ENCODE measurements at regions of chr1 and their contacts with region 1.

Region 1: DNA sequence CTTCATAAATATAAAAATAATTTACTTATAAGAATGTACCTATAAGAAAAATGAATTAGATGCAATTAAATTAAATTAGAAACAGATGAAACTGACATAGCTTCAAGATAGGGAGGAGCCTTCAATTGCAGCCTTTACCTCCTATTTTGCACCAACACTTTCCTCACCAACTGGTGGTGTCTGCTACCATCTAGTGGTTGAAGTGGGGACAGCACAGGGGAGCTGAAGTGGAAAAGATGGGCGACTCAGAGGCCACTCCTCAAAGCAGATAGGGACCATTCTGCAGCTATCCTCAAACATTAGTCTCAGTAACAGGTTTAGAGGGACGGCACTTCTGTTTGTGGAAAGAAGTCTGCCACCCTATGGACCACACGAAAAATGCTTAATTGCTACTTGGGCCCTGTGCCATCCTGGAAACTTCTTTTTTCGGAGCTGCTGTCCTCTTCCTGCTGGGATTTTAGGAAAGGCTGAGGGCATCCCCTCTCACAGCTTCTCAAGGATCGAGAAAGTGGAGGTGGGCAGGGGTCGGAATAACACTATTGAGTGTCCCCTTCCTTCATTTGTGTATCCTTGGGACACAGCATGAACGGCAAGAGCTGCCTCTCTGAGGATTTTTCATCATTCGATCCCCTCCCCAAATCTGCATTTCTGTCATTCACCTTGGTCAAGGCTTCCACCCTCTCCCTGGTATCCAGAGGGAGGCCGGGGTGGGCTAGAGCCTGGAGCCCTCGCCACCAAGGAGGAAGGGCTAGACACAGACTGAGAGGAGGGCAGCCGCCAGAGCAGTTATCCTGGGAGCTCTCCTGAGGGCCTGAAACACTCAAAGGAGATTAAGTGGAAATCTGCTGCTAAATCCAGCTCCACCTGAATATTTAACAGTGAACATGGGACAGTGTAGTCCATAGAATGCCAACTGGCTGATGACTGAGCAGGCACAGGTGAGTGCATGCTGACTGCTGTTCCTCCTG is 9.6 kb downstream of the PROK1 start:
- DNase-seq: peak; percentile 38
- ATAC-seq: peak; percentile 96
- H3K4me3 ChIP-seq: no peak overlapping the region
- H3K27ac ChIP-seq: no peak overlapping the region
- H3K4me1 ChIP-seq: no peaks in the 10 kb centered on the region
- H3K27me3 ChIP-seq: no peaks in the 10 kb centered on the region
- CTCF ChIP-seq: peak; percentile 92 to 98 (median 97)
- EP300 ChIP-seq: no peak
- POLR2A ChIP-seq: no peak
- RAD21 ChIP-seq: peak; percentile 100

Region 2: DNA sequence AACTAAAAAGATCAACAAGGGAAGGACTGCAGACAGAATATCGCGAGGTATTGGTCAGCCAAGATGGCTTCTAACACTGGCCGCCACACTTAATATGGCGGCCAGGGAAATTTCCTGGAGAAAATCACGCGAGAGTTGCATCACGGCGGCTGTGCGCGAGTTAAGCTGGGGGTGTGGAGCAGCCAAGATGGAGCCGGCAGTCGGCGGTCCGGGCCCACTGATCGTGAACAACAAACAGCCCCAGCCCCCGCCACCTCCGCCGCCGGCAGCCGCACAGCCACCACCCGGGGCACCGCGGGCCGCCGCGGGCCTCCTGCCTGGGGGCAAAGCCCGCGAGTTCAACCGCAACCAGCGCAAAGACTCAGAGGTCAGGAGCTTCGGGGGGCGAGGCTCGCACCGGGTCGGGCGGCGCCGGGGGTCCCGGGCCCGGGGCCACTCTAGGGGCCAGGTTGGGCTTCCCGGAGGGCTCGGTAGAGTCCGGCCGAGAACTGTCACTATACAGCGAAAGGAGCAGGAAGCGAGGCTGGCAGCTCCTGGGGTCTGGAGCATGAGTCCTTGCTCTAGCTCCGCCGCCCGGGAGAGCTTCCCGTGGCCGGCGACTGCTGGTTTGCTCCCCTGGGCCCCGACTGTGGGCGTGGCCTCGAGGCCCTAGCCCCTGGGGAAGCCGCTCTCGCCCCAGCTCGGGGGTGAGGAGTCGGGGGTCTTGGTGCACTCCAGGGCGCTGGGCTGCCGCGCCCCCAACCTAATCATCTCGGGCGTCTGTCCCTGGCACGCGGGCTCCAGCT is 425.9 kb before region 1 on chr1 and contains the start of gene STRIP1:
- CTCF ChIA-PET with region 1: interaction called, 13 read pairs
- POLR2A ChIA-PET with region 1: no interaction called
- RAD21 ChIA-PET with region 1: interaction called, 10 read pairs
- SMC1A ChIA-PET with region 1: interaction called, 4 read pairs
- in situ Hi-C with region 1: no loop called
- intact Hi-C with region 1: no loop called
- DNase-seq: peak; percentile 93
- ATAC-seq: peak; percentile 96
- H3K4me3 ChIP-seq: peak within 1 kb of the TSS; percentile 90
- H3K27ac ChIP-seq: peak within 1 kb of the TSS; percentile 84
- H3K4me1 ChIP-seq: peaks cover 19% of the 10 kb centered on the region
- H3K27me3 ChIP-seq: no peaks in the 10 kb centered on the region
- CTCF ChIP-seq: no peak
- EP300 ChIP-seq: no peak
- POLR2A ChIP-seq: peak; percentile 86
- RAD21 ChIP-seq: no peak
- polyA plus RNA-seq, gene STRIP1: 6.3 to 7.9 TPM

Region 3: DNA sequence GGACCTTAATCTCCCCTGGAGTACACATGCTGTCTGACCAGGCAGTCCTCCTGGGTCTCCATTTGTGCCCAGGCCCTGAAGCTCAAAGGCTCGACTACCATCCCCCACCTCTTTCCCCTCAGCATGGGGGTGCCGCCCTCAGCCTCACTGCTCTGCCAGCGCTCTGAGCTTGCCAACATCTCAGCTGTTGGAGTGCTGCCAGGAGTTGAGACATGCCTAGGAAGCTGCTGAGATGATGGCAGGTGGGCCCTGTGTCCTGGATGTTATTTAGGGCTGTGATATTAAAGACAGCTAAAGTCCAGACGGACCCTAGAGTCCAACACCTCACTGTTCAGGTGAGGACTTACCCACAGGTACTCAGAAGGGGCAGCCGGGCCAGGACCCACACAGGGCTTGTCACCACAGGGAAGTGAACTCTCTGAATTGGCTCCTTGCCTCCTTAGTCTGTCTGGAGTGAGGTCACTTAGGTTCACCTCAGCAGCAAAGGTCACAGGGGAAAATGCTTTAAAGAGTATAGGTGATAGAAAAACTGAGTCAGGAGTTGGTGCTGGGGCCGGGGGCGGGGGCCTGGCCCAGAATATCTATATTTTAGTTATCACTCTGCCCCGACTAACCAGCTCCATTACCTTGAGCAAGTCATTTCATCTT is 270.1 kb before region 1 on chr1:
- CTCF ChIA-PET with region 1: interaction called, 18 read pairs
- POLR2A ChIA-PET with region 1: no interaction called
- RAD21 ChIA-PET with region 1: interaction called, 5 read pairs
- SMC1A ChIA-PET with region 1: interaction called, 23 read pairs
- in situ Hi-C with region 1: no loop called
- intact Hi-C with region 1: no loop called
- DNase-seq: no peak
- ATAC-seq: no peak
- H3K4me3 ChIP-seq: no peak overlapping the region
- H3K27ac ChIP-seq: no peak overlapping the region
- H3K4me1 ChIP-seq: no peaks in the 10 kb centered on the region
- H3K27me3 ChIP-seq: peaks cover 0 to 3% of the 10 kb centered on the region in 2 experiments; a peak in 1 of 4 replicates
- CTCF ChIP-seq: no peak
- EP300 ChIP-seq: no peak
- POLR2A ChIP-seq: no peak
- RAD21 ChIP-seq: no peak

Region 4: GRCh38 chr1:110203021-110203661 is 257.4 kb before region 1 on chr1:
- CTCF ChIA-PET with region 1: interaction called, 122 read pairs
- POLR2A ChIA-PET with region 1: interaction called, 3 read pairs
- RAD21 ChIA-PET with region 1: interaction called, 71 read pairs
- SMC1A ChIA-PET with region 1: interaction called, 46 read pairs
- in situ Hi-C with region 1: loop called (anchors 5 kb)
- intact Hi-C with region 1: loop called (anchors 1 kb)
- DNase-seq: peak; percentile 17
- ATAC-seq: peak; percentile 84
- H3K4me3 ChIP-seq: no peak overlapping the region
- H3K27ac ChIP-seq: no peak overlapping the region
- H3K4me1 ChIP-seq: no peaks in the 10 kb centered on the region
- H3K27me3 ChIP-seq: peaks cover 0 to 2% of the 10 kb centered on the region in 2 experiments; a peak in 2 of 4 replicates
- CTCF ChIP-seq: peak; percentile 81 to 89 (median 81)
- EP300 ChIP-seq: no peak
- POLR2A ChIP-seq: no peak
- RAD21 ChIP-seq: peak; percentile 90

Region 5: DNA sequence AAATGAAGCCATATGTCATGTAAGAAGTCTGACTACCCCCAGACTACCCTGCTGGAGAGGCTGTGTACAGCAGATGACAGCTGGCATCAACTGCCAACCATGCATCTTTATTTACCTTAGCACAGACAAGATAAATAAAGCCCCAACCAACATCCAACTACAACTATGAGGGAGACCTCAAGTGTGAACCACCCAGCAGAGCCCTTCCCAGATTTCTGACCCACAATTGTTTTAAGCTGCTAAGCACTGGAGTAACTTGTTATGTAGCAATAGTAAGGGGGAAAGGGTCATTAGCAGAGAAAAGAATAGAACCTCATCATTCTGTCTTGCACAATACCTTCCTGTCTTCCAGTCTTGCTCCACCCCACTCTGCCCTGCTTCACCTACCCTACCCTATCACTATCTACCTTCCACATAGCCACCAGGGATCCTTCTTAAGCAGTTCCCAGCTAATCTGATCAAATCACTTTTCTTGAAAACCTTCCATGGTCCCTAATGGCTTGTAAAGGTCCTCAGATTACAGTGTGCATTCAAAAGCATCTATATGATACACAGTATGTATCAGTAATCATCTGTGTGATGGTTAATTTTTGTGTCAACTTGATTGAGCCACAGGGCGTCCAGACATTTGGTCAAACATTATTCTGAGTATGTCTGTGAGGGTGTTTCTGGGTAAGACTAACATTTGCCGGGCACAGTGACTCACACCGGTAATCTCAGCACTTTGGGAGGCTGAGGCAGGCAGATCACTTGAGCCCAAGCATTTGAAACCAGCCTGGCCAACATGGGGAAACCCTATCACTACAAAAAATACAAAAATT is 141.0 kb before region 1 on chr1:
- CTCF ChIA-PET with region 1: interaction called, 14 read pairs
- POLR2A ChIA-PET with region 1: no interaction called
- RAD21 ChIA-PET with region 1: interaction called, 8 read pairs
- SMC1A ChIA-PET with region 1: interaction called, 6 read pairs
- in situ Hi-C with region 1: no loop called
- intact Hi-C with region 1: no loop called
- DNase-seq: no peak
- ATAC-seq: no peak
- H3K4me3 ChIP-seq: no peak overlapping the region
- H3K27ac ChIP-seq: no peak overlapping the region
- H3K4me1 ChIP-seq: no peaks in the 10 kb centered on the region
- H3K27me3 ChIP-seq: no peaks in the 10 kb centered on the region
- CTCF ChIP-seq: no peak
- EP300 ChIP-seq: no peak
- POLR2A ChIP-seq: no peak
- RAD21 ChIP-seq: no peak

Region 6: GRCh38 chr1:110384581-110385321 is 75.8 kb before region 1 on chr1:
- CTCF ChIA-PET with region 1: interaction called, 14 read pairs
- POLR2A ChIA-PET with region 1: interaction called, 5 read pairs
- RAD21 ChIA-PET with region 1: no interaction called
- SMC1A ChIA-PET with region 1: interaction called, 4 read pairs
- in situ Hi-C with region 1: no loop called
- intact Hi-C with region 1: no loop called
- DNase-seq: peak; percentile 45
- ATAC-seq: peak; percentile 90
- H3K4me3 ChIP-seq: peak overlapping the region; percentile 53; the same call in 1 of the 2 replicates
- H3K27ac ChIP-seq: peak overlapping the region; percentile 69
- H3K4me1 ChIP-seq: peaks cover 25% of the 10 kb centered on the region
- H3K27me3 ChIP-seq: no peaks in the 10 kb centered on the region
- CTCF ChIP-seq: no peak
- EP300 ChIP-seq: peak in 1 of 2 experiments; percentile 15; a peak in 1 of 4 replicates
- POLR2A ChIP-seq: peak; percentile 43
- RAD21 ChIP-seq: no peak

Region 7: GRCh38 chr1:110412576-110412975 is 48.0 kb before region 1 on chr1:
- CTCF ChIA-PET with region 1: interaction called, 146 read pairs
- POLR2A ChIA-PET with region 1: interaction called, 3 read pairs
- RAD21 ChIA-PET with region 1: interaction called, 28 read pairs
- SMC1A ChIA-PET with region 1: interaction called, 61 read pairs
- in situ Hi-C with region 1: no loop called
- intact Hi-C with region 1: loop called (anchors 1 kb)
- DNase-seq: peak; percentile 24
- ATAC-seq: peak; percentile 88
- H3K4me3 ChIP-seq: no peak overlapping the region
- H3K27ac ChIP-seq: no peak overlapping the region
- H3K4me1 ChIP-seq: peaks cover 6% of the 10 kb centered on the region
- H3K27me3 ChIP-seq: peaks cover 0 to 2% of the 10 kb centered on the region in 2 experiments; a peak in 2 of 4 replicates
- CTCF ChIP-seq: peak; percentile 80 to 83 (median 83)
- EP300 ChIP-seq: no peak
- POLR2A ChIP-seq: no peak
- RAD21 ChIP-seq: peak; percentile 86

Region 8: DNA sequence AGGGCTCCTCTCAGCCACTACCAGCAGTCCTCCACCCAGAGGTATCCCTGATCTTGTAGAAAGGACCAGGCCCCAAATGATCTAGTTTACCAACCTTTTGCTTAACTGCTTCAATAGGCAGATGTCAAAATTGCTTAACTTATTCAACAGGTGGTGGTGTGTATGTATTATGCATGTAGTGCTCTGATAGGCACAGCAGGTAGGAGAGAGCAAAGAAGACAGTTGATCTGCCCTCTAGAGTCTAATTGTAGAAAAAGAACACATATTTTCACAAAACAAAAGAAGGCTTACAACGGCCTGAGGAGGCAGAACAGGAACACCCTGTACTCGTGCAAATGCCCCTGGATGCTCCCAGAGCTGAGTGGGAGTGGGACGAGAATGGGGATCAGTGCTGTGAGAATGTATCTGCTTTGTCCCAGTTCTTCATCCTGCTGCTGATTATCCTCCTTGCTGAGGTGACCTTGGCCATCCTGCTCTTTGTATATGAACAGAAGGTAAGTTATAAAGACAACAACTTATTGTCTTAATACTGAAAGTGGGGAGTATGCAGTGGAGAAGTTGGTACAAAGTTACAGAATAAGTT is 433.5 kb after region 1 on chr1:
- CTCF ChIA-PET with region 1: no interaction called
- POLR2A ChIA-PET with region 1: no interaction called
- RAD21 ChIA-PET with region 1: no interaction called
- SMC1A ChIA-PET with region 1: no interaction called
- in situ Hi-C with region 1: no loop called
- intact Hi-C with region 1: no loop called
- DNase-seq: no peak
- ATAC-seq: peak; percentile 57
- H3K4me3 ChIP-seq: no peak overlapping the region
- H3K27ac ChIP-seq: no peak overlapping the region
- H3K4me1 ChIP-seq: peaks cover 19% of the 10 kb centered on the region
- H3K27me3 ChIP-seq: no peaks in the 10 kb centered on the region
- CTCF ChIP-seq: no peak; a peak in 1 of 6 replicates
- EP300 ChIP-seq: no peak
- POLR2A ChIP-seq: no peak
- RAD21 ChIP-seq: no peak